ENCODE measurements at regions of chr20 and their contacts with region 1.

Region 1: DNA sequence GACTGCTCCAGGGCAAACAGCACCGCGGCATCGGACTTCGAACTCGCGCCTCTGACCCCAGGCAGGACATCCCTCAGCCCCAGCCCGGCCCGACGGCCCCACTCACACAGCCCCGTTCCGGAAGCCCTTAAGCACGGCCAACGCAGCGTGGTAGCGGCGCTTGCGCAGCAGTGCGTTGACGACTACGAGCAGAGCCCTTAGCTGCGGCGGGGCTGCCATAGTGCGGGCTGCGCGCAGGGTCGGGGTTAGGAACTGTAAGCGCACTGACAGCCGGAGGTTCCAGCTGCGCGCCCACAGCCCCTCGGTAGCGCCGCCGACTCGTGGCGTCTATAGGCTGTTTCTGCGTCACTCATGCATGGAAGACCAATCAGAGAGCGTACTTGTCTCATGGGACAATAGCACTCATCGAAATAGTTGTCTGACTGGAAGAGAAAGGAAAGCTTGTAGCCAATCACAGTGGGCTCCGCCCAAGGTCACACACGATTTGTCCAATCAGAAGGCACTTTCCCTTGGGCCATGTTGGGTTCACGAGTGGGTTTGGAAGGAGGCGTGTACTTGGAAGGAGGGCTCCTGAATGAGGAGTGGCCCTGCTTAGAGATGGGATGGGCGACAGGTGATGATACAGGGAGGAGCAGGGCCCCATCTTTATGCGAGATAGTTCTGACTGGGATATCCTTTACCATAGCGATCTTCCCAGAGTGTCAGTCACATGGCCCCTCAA is at the start of gene PXMP4:
- DNase-seq: peak; percentile 93
- ATAC-seq: peak; percentile 99
- H3K4me3 Mint-ChIP-seq: peak within 1 kb of the TSS; percentile 91
- H3K27ac Mint-ChIP-seq: peak within 1 kb of the TSS; percentile 81
- H3K4me1 Mint-ChIP-seq: peaks cover 27% of the 10 kb centered on the region
- H3K27me3 Mint-ChIP-seq: no peaks in the 10 kb centered on the region
- total RNA-seq, gene PXMP4: 17.1 to 17.7 TPM

Region 2: GRCh38 chr20:33686100-33686983 is 33.8 kb before region 1 on chr20 and contains the start of gene E2F1:
- CTCF ChIA-PET with region 1: interaction called, 12 read pairs
- POLR2A ChIA-PET with region 1: interaction called, 17 read pairs
- DNase-seq: peak; percentile 97
- ATAC-seq: peak; percentile 91
- H3K4me3 Mint-ChIP-seq: peak within 1 kb of the TSS; percentile 94
- H3K27ac Mint-ChIP-seq: peak within 1 kb of the TSS; percentile 93
- H3K4me1 Mint-ChIP-seq: peaks cover 89% of the 10 kb centered on the region
- H3K27me3 Mint-ChIP-seq: no peaks in the 10 kb centered on the region
- total RNA-seq, gene E2F1: 74.5 to 80.8 TPM

Region 3: DNA sequence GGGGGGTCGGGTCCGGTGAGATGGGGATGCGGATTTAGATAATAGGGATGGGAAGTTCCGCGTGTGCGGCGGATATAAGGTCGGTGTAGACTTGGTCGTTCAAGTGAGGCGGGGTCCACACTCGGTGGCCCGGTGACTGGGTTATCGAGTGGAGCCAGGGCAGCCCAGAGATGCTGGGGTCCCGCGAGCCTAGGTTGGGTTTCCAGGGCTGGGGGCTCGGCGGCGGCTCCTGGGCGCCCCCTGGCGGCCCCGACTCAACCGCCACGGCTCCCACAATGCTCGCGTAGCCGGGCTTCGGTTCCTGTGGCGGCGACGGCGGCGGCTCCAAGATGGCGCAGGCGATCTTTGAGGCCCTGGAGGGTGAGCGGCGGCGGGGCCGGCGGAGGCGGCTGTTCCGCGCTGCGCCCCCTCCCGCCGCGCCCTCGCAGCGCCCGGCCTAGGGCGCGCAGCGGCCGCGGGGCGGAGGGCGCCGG is 11.6 kb after region 1 on chr20 and contains the start of gene ZNF341:
- CTCF ChIA-PET with region 1: interaction called, 12 read pairs
- POLR2A ChIA-PET with region 1: interaction called, 15 read pairs
- DNase-seq: peak; percentile 91
- ATAC-seq: peak; percentile 90
- H3K4me3 Mint-ChIP-seq: peak within 1 kb of the TSS; percentile 89
- H3K27ac Mint-ChIP-seq: peak within 1 kb of the TSS; percentile 94
- H3K4me1 Mint-ChIP-seq: peaks cover 28% of the 10 kb centered on the region
- H3K27me3 Mint-ChIP-seq: no peaks in the 10 kb centered on the region
- total RNA-seq, gene ZNF341: 4.7 to 5.2 TPM

Region 4: GRCh38 chr20:33947709-33948295 is 227.7 kb after region 1 on chr20:
- CTCF ChIA-PET with region 1: no interaction called
- POLR2A ChIA-PET with region 1: no interaction called
- DNase-seq: peak; percentile 64
- ATAC-seq: peak; percentile 51
- H3K4me3 Mint-ChIP-seq: no peak overlapping the region
- H3K27ac Mint-ChIP-seq: no peak overlapping the region
- H3K4me1 Mint-ChIP-seq: no peaks in the 10 kb centered on the region
- H3K27me3 Mint-ChIP-seq: peaks cover 8% of the 10 kb centered on the region

Region 5: DNA sequence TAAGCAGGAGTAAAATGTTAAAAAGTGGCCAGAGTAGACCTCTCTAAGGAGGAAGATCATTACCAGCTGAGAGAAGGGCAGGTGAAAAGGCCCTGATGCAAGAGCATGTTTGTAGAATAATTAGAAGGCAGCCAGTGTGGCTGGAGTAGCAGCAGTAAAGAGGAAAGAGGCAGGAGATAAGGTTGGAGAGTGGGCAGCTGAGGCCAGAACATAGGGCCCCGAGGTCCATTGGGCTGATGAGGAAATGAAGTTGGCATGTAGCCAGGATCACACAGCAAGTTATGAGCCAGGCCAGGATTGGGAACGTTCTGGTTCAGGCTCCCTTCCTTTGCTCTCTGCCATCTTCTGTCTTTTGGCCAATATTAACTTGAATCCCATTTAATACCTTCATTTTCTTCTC is 325.1 kb after region 1 on chr20:
- CTCF ChIA-PET with region 1: no interaction called
- POLR2A ChIA-PET with region 1: no interaction called
- DNase-seq: no peak
- ATAC-seq: no peak
- H3K4me3 Mint-ChIP-seq: no peak overlapping the region
- H3K27ac Mint-ChIP-seq: no peak overlapping the region
- H3K4me1 Mint-ChIP-seq: peaks cover 16% of the 10 kb centered on the region
- H3K27me3 Mint-ChIP-seq: no peaks in the 10 kb centered on the region

Measured in activated CD8-positive, alpha-beta T cell treated with anti-CD3 and anti-CD28 coated beads, Interleukin-2, amount 10 ng/mL, durations not matched to agents 7 days and 5 days (primary cell).